Activated naive CD4-positive, alpha-beta T cell treated with anti-CD3 and anti-CD28 coated beads for 36 hours (primary cell): ENCODE measurements at regions of chr2 and their contacts with region 1.

Region 1: DNA sequence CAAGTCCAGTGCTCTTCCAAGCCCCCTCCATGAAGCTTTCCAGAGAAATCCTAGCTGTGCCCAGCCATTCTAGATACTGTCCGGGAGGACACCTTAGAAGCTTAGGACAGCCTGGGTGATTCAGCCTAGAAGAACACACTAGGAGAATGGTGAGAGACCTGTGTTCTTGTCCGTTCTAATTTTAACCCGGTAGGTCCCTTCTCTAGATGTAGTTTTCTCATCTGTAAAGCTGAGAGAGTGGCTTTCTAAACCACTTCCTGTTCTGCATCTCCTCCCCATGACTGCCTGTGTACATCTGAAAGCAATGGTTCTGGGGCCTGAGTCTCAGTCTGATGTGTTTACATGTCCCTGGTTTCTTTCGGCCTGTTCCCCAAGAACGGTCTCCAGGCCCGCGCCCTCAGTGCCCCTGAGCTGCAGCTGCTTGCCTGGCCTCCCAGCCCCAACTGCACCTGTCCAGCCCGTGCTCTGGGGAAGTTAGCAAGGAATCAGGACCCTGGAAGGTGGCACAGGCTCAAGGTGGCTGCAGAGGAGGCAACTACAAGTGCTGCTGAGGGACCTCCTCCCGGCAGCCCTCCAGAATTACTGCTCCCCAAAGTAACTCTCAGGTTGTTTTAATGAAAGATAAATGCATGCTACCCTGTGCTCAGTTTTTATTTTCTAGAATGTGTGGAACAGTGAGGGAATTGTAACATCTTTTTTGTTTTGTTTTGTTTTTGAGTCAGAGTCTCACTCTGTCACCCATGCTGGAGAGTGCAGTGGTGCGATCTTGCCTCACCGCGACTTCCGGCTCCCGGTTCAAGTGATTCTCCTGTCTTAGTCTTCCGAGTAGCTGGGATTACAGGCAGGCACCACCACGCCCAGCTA is 105.9 kb downstream of the LBH start:
- DNase-seq: peak; percentile 85
- H3K4me3 Mint-ChIP-seq: peak overlapping the region; percentile 58
- H3K27ac Mint-ChIP-seq: peak overlapping the region; percentile 92
- H3K4me1 Mint-ChIP-seq: peaks cover 77% of the 10 kb centered on the region
- H3K27me3 Mint-ChIP-seq: no peaks in the 10 kb centered on the region

Region 2: GRCh38 chr2:30225131-30225762 is 112.0 kb before region 1 on chr2:
- CTCF ChIA-PET with region 1: interaction called, 4 read pairs
- intact Hi-C with region 1: loop called (anchors 1 kb)
- DNase-seq: peak; percentile 60
- H3K4me3 Mint-ChIP-seq: peak overlapping the region; percentile 81
- H3K27ac Mint-ChIP-seq: peak overlapping the region; percentile 87
- H3K4me1 Mint-ChIP-seq: peaks cover 64% of the 10 kb centered on the region
- H3K27me3 Mint-ChIP-seq: peaks cover 3% of the 10 kb centered on the region

Region 3: GRCh38 chr2:30252723-30253701 is 84.2 kb before region 1 on chr2:
- CTCF ChIA-PET with region 1: interaction called, 3 read pairs
- intact Hi-C with region 1: loop called (anchors 2 kb)
- DNase-seq: peak; percentile 87
- H3K4me3 Mint-ChIP-seq: peak overlapping the region; percentile 14
- H3K27ac Mint-ChIP-seq: peak overlapping the region; percentile 81
- H3K4me1 Mint-ChIP-seq: peaks cover 94% of the 10 kb centered on the region
- H3K27me3 Mint-ChIP-seq: no peaks in the 10 kb centered on the region

Region 4: DNA sequence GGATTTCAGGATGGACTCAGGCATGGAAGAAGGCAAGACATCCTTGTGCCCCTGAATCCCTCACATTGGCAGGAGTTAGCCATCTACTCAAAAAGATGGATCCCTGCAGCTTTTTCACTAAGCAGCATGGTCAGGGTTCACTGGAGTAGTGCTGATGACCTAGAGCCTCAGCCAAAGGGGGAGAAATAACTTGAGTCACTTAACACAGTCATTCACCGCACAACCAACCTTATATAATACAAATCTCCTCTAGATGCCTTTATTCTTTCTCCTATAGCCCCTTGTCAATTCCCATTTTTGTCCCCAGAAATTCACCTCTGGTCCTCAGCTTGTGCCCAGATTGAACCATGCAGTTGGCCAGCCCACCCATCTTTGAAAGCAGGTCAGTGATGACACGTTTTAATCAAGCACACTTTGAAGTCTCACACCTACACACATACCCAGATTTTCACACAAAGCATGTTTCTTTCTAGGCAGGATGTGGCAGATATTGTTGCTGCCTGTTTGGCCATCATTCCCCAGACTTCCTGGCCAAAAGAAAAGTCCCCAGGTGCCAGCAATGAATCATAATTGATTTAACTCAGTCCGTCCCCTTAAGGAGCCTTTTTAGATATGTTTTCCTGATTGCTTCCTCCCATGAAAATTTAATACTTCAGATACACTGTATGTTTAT is 21.7 kb before region 1 on chr2:
- CTCF ChIA-PET with region 1: no interaction called
- intact Hi-C with region 1: loop called (anchors 1 kb)
- DNase-seq: peak; percentile 61
- H3K4me3 Mint-ChIP-seq: no peak overlapping the region
- H3K27ac Mint-ChIP-seq: peak overlapping the region; percentile 77
- H3K4me1 Mint-ChIP-seq: peaks cover 36% of the 10 kb centered on the region
- H3K27me3 Mint-ChIP-seq: no peaks in the 10 kb centered on the region

Region 5: GRCh38 chr2:30421604-30422443 is 84.6 kb after region 1 on chr2:
- CTCF ChIA-PET with region 1: interaction called, 6 read pairs
- intact Hi-C with region 1: loop called (anchors 1 kb)
- DNase-seq: peak; percentile 37
- H3K4me3 Mint-ChIP-seq: peak overlapping the region; percentile 74
- H3K27ac Mint-ChIP-seq: peak overlapping the region; percentile 94
- H3K4me1 Mint-ChIP-seq: peaks cover 54% of the 10 kb centered on the region
- H3K27me3 Mint-ChIP-seq: no peaks in the 10 kb centered on the region

Region 6: DNA sequence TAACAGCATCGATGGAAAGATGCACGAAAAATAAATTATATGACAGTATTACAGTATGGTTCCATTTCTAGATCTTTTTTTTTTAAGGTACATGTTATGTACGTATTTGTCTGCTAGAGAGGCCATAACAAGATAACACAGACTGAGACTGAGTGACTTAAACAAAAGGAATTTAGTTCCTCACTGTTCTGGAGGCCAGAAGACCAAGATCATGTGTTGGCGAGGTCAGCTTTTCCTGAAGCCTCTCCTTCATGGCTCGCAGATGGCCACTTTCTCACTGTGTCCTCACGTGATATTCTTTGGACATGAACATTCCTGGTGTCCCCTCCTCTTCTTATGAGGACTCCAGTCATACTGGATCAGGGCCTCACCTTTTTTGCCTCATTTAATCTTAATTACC is 292.7 kb after region 1 on chr2:
- CTCF ChIA-PET with region 1: no interaction called
- intact Hi-C with region 1: loop called (anchors 10 kb)
- DNase-seq: no peak
- H3K4me3 Mint-ChIP-seq: no peak overlapping the region
- H3K27ac Mint-ChIP-seq: no peak overlapping the region
- H3K4me1 Mint-ChIP-seq: peaks cover 27% of the 10 kb centered on the region
- H3K27me3 Mint-ChIP-seq: no peaks in the 10 kb centered on the region

Region 7: DNA sequence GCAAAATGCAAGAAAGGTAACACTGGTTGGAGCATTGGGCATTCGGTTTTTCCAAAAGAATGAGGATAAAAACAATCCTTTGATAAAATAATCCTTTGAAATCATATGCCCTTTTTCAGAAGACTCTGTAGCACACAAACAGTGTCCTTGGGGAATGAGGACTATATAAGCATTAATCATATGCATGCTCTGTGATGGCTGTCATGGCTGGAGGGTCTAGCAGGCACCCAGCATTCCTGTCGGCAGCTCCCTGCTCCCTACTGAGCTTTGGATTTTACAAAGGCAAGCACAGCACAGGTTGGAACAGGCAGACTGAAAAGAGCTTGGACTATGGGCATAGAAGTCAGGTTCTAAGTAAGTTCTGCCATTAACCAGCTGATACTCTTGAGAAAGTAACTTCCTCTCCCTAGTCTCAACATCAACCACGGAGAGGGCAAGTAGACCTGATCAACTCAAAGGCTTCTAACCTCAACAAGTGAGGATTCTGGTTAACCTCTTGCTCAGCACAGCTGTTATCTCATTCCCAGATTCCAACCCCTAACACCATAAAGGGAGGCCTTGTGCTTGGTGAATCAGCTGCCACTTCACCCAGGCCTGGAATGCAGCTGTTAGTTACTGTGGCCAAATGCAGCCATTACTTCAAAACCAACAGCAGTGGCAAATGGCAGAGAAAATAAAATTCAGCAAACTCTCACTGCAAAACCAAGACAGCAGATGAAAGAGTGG is 771.5 kb after region 1 on chr2:
- CTCF ChIA-PET with region 1: no interaction called
- intact Hi-C with region 1: no loop called
- DNase-seq: no peak
- H3K4me3 Mint-ChIP-seq: no peak overlapping the region
- H3K27ac Mint-ChIP-seq: no peak overlapping the region
- H3K4me1 Mint-ChIP-seq: no peaks in the 10 kb centered on the region
- H3K27me3 Mint-ChIP-seq: peaks cover 20% of the 10 kb centered on the region